CD8-positive, alpha-beta memory T cell (primary cell): ENCODE measurements at regions of chr19 and their contacts with region 1.

Region 1: DNA sequence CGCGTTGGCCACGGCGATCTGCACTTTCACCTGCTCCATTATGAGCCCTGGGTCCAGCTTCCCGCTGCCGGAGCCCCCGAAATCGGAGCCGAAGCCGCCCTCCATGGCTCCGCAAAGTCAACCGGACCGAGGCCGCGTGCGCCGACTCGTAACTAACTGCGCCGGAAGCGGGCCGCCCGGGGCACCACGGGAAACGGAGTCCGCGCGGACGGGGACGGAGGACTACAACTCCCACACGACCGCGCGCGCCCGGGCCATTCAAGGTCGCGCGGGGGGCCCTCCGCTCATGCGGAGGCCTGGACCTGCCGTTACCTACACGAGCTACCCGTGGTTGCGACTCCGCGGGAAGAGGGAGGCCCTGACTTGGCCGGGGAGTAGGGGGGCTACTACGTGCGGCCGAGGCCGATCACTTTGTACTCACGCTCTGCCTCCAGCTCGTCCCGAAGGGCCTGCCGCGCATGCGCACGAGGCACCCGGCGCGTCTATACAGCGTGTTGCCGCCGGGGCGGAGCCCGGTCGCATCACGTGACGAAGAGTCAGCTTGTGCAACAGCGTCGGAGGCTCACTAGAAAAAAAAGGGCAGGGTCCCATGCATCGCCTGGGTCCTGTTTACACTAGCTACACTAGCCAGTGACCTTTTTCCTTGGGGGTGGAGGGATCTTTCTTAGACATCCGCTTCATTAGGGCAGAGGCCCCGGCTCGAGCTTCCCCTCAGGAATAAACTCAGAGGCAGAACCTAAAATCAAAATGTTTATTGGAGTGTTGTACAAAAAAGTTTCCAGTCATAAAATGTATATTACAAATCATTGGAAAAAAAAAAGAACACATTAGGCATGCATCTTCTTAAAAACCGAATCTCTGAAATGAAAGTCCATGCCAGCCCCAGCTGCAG is at the start of gene TIMM13:
- DNase-seq: peak; percentile 95 to 99 (median 96)
- H3K4me3 ChIP-seq: peak within 1 kb of the TSS; percentile 84
- H3K4me3 Mint-ChIP-seq: peak within 1 kb of the TSS; percentile 91 to 99 (median 94)
- H3K27ac ChIP-seq: peak within 1 kb of the TSS; percentile 91
- H3K27ac Mint-ChIP-seq: peak within 1 kb of the TSS; percentile 95 to 99 (median 97)
- H3K4me1 ChIP-seq: peaks cover 19% of the 10 kb centered on the region
- H3K4me1 Mint-ChIP-seq: peaks cover 10 to 19% (median 13%) of the 10 kb centered on the region in 3 donors
- H3K27me3 ChIP-seq: no peaks in the 10 kb centered on the region
- H3K27me3 Mint-ChIP-seq: peaks cover 0 to 2% of the 10 kb centered on the region in 2 donors
- total RNA-seq, gene TIMM13: 154 to 169 TPM

Region 2: DNA sequence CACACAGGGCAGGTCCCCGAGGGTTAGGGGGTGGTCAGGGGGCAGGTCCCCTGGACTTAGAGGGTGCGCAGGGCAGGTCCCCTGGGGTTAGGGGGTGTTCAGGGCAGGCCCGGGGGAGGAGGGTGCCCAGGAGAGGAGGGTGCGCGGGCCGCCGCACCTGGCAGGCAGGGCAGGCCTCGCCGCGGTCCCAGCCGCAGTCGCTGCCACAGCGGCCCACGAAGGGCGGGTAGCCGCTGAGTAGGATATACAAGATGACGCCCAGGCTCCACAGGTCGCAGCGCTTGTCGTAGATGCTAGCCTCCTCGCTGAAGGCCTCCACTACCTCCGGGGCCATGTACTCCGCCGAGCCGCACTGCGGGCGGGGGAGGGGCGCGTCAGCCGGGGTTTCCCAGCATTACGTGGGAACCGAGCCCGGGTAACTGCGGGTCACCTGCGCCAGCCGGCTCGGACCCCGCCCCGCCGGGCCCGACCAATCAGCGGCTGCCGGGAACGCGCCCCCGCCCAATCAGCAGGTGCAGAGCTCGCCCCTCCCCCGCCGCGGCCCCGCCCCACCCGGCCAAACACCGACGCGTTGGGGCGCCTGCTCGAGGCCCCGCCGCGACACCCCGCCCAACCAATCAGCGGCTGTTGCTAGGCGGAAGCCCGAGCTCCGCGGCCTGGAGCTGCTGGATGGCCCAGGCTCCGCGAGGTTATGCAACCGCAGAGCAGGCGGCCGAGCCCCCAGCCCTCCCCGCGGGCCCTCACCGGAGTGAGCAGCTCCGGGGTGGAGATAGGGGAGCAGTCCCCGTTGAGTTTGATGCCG is 385.8 kb before region 1 on chr19:
- CTCF ChIA-PET with region 1: no interaction called
- POLR2A ChIA-PET with region 1: interaction called, 13 read pairs
- DNase-seq: peak; percentile 100
- H3K4me3 ChIP-seq: peak overlapping the region; percentile 65
- H3K4me3 Mint-ChIP-seq: peak overlapping the region in 6 of 7 donors; percentile 47 to 83 (median 63)
- H3K27ac ChIP-seq: peak overlapping the region; percentile 94
- H3K27ac Mint-ChIP-seq: peak overlapping the region; percentile 92 to 97 (median 94)
- H3K4me1 ChIP-seq: peaks cover 49% of the 10 kb centered on the region
- H3K4me1 Mint-ChIP-seq: peaks cover 14 to 37% (median 14%) of the 10 kb centered on the region in 3 donors
- H3K27me3 ChIP-seq: no peaks in the 10 kb centered on the region
- H3K27me3 Mint-ChIP-seq: peaks cover 0 to 2% of the 10 kb centered on the region in 2 donors

Region 3: DNA sequence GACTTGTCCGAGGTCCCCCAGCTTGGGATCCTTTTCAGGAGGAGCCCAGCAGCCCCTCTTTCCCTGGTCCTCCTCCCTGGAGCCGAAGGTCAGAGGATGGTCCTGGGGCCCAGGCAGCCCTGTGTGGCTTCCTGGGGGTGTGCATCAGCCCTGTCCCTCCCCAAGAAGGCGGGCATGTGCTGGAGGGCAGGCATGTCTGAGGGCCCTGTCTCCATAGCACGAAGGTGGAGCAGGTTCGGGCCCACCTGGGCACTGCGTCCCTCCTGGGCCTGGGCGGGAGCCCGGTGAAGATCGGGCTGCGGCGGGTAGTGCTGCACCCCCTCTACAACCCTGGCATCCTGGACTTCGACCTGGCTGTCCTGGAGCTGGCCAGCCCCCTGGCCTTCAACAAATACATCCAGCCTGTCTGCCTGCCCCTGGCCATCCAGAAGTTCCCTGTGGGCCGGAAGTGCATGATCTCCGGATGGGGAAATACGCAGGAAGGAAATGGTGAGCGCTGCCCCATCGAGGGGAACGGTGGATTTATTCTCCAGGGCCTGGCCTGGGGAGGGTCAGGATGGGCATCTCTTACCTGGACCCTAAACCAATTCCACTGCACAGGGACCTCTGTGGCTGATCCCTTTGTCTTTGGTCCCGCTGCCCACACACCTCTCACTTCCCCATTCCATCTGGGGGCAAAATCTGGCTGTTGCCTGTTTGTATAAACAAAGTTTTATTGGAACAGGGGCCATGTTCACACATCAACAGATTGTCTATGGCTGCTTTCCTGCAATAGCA is 11.2 kb before region 1 on chr19:
- CTCF ChIA-PET with region 1: no interaction called
- POLR2A ChIA-PET with region 1: no interaction called
- DNase-seq: no peak
- H3K4me3 ChIP-seq: no peak overlapping the region
- H3K4me3 Mint-ChIP-seq: no peak overlapping the region
- H3K27ac ChIP-seq: no peak overlapping the region
- H3K27ac Mint-ChIP-seq: peak overlapping the region in 1 of 8 donors; percentile 54
- H3K4me1 ChIP-seq: no peaks in the 10 kb centered on the region
- H3K4me1 Mint-ChIP-seq: no peaks in the 10 kb centered on the region
- H3K27me3 ChIP-seq: no peaks in the 10 kb centered on the region
- H3K27me3 Mint-ChIP-seq: peaks cover 1 to 7% of the 10 kb centered on the region in 2 donors

Region 4: DNA sequence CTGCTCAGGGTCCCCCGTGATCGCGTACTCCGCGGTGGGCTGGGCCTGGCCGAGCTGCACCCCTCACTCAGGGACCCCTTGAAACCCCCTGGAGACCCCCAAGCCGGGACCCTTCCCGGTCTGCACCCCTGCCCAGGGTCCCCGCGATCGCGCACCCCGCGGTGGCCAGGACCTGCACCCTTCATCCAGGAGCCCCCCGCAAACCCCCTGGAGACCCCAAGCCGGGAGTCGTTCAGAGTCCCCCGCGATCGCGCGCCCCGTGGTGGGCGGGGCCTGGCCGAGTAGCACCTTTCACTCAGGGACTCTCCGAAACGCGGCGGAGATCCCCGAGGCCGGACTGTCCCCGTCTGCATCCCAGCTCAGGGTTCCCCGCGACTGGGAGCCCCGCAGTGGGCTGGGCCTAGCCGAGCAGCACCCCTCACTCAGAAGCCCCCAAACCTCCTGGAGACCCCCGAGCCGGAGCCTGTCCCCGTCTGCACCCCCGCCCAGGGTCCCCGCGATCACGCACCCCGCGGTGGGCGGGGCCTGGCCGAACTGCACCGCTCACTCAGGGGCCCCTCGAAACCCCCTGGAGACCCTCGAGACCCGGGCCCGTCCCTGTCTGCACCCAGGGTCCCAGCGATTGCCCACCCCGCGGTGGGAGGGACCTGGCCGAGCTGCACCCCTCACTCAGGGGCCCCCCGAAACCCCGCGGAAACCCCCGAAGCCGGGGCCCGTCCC is 28.3 kb after region 1 on chr19:
- CTCF ChIA-PET with region 1: interaction called, 5 read pairs
- POLR2A ChIA-PET with region 1: interaction called, 10 read pairs
- DNase-seq: peak; percentile 28 to 73 (median 55)
- H3K4me3 ChIP-seq: peak overlapping the region; percentile 78
- H3K4me3 Mint-ChIP-seq: peak overlapping the region; percentile 76 to 93 (median 88)
- H3K27ac ChIP-seq: peak overlapping the region; percentile 74
- H3K27ac Mint-ChIP-seq: peak overlapping the region in 7 of 8 donors; percentile 58 to 92 (median 88)
- H3K4me1 ChIP-seq: peaks cover 15% of the 10 kb centered on the region
- H3K4me1 Mint-ChIP-seq: peaks cover 15 to 21% (median 15%) of the 10 kb centered on the region in 3 donors
- H3K27me3 ChIP-seq: no peaks in the 10 kb centered on the region
- H3K27me3 Mint-ChIP-seq: peaks cover 0 to 1% of the 10 kb centered on the region in 2 donors